ENCODE measurements at regions of chr18 and their contacts with region 1.

Region 1: GRCh38 chr18:58671111-58671631 is at the start of gene MALT1:
- DNase-seq: peak; percentile 93
- H3K4me3 Mint-ChIP-seq: peak within 1 kb of the TSS; percentile 94
- H3K27ac Mint-ChIP-seq: peak within 1 kb of the TSS; percentile 92
- H3K4me1 Mint-ChIP-seq: peaks cover 65% of the 10 kb centered on the region
- H3K27me3 Mint-ChIP-seq: no peaks in the 10 kb centered on the region
- total RNA-seq, gene MALT1: 39.7 to 41.0 TPM

Region 2: DNA sequence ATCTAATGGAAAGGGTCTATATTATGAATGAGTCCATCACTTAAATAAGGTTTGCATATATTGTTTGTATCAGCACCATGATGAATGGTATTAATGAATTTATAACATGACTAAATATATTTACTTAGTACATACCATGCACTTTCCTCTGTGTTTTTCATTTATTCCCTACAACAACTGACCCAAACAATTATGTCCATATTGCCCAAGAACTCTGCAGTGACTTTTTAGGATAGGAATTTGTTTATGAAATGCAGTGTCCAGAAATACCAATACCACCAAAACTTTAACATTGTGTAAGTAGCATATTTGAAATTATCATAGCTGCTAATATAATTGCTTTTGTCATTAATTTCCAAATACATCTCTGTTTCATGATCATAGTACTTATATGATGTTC is 1900.3 kb before region 1 on chr18:
- CTCF ChIA-PET with region 1: no interaction called
- intact Hi-C with region 1: no loop called
- DNase-seq: no peak
- H3K4me3 Mint-ChIP-seq: no peak overlapping the region
- H3K27ac Mint-ChIP-seq: no peak overlapping the region
- H3K4me1 Mint-ChIP-seq: no peaks in the 10 kb centered on the region
- H3K27me3 Mint-ChIP-seq: no peaks in the 10 kb centered on the region

Region 3: GRCh38 chr18:57579934-57580333 is 1091.2 kb before region 1 on chr18:
- CTCF ChIA-PET with region 1: no interaction called
- intact Hi-C with region 1: no loop called
- DNase-seq: peak; percentile 9
- H3K4me3 Mint-ChIP-seq: no peak overlapping the region
- H3K27ac Mint-ChIP-seq: no peak overlapping the region
- H3K4me1 Mint-ChIP-seq: peaks cover 21% of the 10 kb centered on the region
- H3K27me3 Mint-ChIP-seq: no peaks in the 10 kb centered on the region

Region 4: GRCh38 chr18:58364876-58365528 is 306.2 kb before region 1 on chr18:
- CTCF ChIA-PET with region 1: no interaction called
- intact Hi-C with region 1: no loop called
- DNase-seq: no peak
- H3K4me3 Mint-ChIP-seq: no peak overlapping the region
- H3K27ac Mint-ChIP-seq: no peak overlapping the region
- H3K4me1 Mint-ChIP-seq: no peaks in the 10 kb centered on the region
- H3K27me3 Mint-ChIP-seq: no peaks in the 10 kb centered on the region

Region 5: DNA sequence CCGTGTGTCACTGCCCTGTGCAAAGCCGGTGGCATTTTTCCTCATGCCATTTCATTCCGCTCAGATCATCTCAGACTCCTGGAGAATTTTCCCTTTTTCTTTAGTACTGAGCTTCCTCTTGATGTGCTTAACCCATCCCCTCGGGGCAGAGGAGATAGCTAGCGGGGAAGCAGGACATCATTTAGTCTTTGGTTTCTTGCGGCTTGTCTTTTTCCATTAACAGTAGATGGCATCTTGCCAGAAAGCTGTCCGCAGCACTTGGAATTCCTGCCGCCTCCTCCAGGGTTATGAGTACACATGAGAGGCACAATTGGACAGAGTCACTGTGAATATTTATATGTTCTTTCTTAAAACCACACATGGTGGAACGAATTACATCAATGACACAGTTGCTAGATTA is 268.9 kb before region 1 on chr18:
- CTCF ChIA-PET with region 1: no interaction called
- intact Hi-C with region 1: loop called (anchors 5 kb)
- DNase-seq: no peak
- H3K4me3 Mint-ChIP-seq: no peak overlapping the region
- H3K27ac Mint-ChIP-seq: no peak overlapping the region
- H3K4me1 Mint-ChIP-seq: peaks cover 25% of the 10 kb centered on the region
- H3K27me3 Mint-ChIP-seq: no peaks in the 10 kb centered on the region

Region 6: GRCh38 chr18:58605027-58606020 is 65.8 kb before region 1 on chr18:
- CTCF ChIA-PET with region 1: interaction called, 4 read pairs
- intact Hi-C with region 1: loop called (anchors 1 kb)
- DNase-seq: peak; percentile 84
- H3K4me3 Mint-ChIP-seq: no peak overlapping the region
- H3K27ac Mint-ChIP-seq: no peak overlapping the region
- H3K4me1 Mint-ChIP-seq: peaks cover 60% of the 10 kb centered on the region
- H3K27me3 Mint-ChIP-seq: no peaks in the 10 kb centered on the region

Region 7: GRCh38 chr18:58682429-58683069 is 11.4 kb after region 1 on chr18:
- CTCF ChIA-PET with region 1: interaction called, 4 read pairs
- intact Hi-C with region 1: loop called (anchors 1 kb)
- DNase-seq: no peak
- H3K4me3 Mint-ChIP-seq: no peak overlapping the region
- H3K27ac Mint-ChIP-seq: no peak overlapping the region
- H3K4me1 Mint-ChIP-seq: peaks cover 65% of the 10 kb centered on the region
- H3K27me3 Mint-ChIP-seq: no peaks in the 10 kb centered on the region

Region 8: GRCh38 chr18:58716060-58716756 is 45.0 kb after region 1 on chr18:
- CTCF ChIA-PET with region 1: no interaction called
- intact Hi-C with region 1: loop called (anchors 1 kb)
- DNase-seq: no peak
- H3K4me3 Mint-ChIP-seq: no peak overlapping the region
- H3K27ac Mint-ChIP-seq: peak overlapping the region; percentile 43
- H3K4me1 Mint-ChIP-seq: peaks cover 54% of the 10 kb centered on the region
- H3K27me3 Mint-ChIP-seq: no peaks in the 10 kb centered on the region

Region 9: GRCh38 chr18:59139371-59140298 is 468.5 kb after region 1 on chr18 and contains the start of gene SEC11C:
- CTCF ChIA-PET with region 1: no interaction called
- intact Hi-C with region 1: loop called (anchors 1 kb)
- DNase-seq: peak; percentile 97
- H3K4me3 Mint-ChIP-seq: peak within 1 kb of the TSS; percentile 90
- H3K27ac Mint-ChIP-seq: peak within 1 kb of the TSS; percentile 97
- H3K4me1 Mint-ChIP-seq: peaks cover 43% of the 10 kb centered on the region
- H3K27me3 Mint-ChIP-seq: peaks cover 3% of the 10 kb centered on the region
- total RNA-seq, gene SEC11C: 45.0 to 46.7 TPM

Measured in activated naive CD4-positive, alpha-beta T cell treated with anti-CD3 and anti-CD28 coated beads for 36 hours (primary cell).